ENCODE measurements at regions of chr20 and their contacts with region 1.

Region 1: GRCh38 chr20:51456511-51457509 is 85.7 kb downstream of the NFATC2 start:
- DNase-seq: peak; percentile 36
- ATAC-seq: peak; percentile 43
- H3K4me3 Mint-ChIP-seq: peak overlapping the region; percentile 59
- H3K27ac Mint-ChIP-seq: peak overlapping the region; percentile 79
- H3K4me1 Mint-ChIP-seq: peaks cover 64% of the 10 kb centered on the region
- H3K27me3 Mint-ChIP-seq: no peaks in the 10 kb centered on the region
- CTCF ChIP-seq: no peak

Region 2: DNA sequence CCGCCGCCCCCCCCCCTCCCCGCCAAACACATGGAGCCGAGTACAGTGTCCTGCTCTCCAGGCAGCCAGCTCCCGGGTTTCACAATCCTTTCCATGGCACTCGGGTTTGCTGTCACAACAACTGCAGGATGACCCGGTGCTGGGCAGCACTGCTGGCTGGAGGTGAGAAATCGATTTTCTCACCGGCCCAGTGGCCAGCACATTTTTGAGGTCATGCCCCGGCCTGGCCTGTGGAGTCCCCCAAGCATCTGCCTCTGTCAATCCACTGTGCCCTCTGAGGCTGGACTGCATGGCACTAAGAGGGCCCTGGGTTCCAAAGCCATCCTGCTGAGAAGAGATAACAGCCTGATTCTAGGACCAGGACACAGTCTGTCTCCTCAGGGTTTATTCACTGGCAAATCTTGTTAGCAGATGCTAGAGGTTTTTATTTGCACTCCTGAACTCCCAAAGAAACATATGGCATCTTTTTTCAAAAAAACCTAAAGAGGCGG is 43.8 kb before region 1 on chr20:
- CTCF ChIA-PET with region 1: no interaction called
- POLR2A ChIA-PET with region 1: interaction called, 7 read pairs
- intact Hi-C with region 1: loop called (anchors 2 kb)
- DNase-seq: no peak
- ATAC-seq: no peak
- H3K4me3 Mint-ChIP-seq: no peak overlapping the region
- H3K27ac Mint-ChIP-seq: peak overlapping the region; percentile 61
- H3K4me1 Mint-ChIP-seq: peaks cover 78% of the 10 kb centered on the region
- H3K27me3 Mint-ChIP-seq: no peaks in the 10 kb centered on the region
- CTCF ChIP-seq: no peak

Region 3: GRCh38 chr20:51480507-51481270 is 23.9 kb after region 1 on chr20:
- CTCF ChIA-PET with region 1: no interaction called
- POLR2A ChIA-PET with region 1: interaction called, 7 read pairs
- intact Hi-C with region 1: loop called (anchors 1 kb)
- DNase-seq: no peak
- ATAC-seq: peak; percentile 84
- H3K4me3 Mint-ChIP-seq: peak overlapping the region; percentile 48
- H3K27ac Mint-ChIP-seq: peak overlapping the region; percentile 80
- H3K4me1 Mint-ChIP-seq: peaks cover 38% of the 10 kb centered on the region
- H3K27me3 Mint-ChIP-seq: no peaks in the 10 kb centered on the region
- CTCF ChIP-seq: no peak

Region 4: DNA sequence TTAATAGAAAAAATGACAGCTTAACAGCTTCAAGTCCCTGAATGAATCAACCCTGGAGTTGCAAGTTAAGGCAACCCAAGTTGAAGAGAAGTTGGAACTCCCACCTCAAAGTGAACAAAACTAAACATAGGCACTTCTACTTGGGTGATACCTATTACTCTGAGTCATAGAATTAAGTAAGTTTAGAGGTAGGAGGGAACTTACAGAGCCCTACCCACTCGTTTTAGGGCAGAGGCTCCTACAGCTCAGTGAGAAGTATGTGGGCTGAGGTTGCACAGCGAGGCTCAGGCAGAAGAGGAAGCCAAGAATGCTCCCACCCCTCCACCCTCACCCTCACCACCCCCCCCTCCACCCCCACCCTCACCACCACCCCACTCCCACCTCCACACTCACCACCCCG is 43.5 kb after region 1 on chr20:
- CTCF ChIA-PET with region 1: interaction called, 3 read pairs
- POLR2A ChIA-PET with region 1: interaction called, 27 read pairs
- intact Hi-C with region 1: loop called (anchors 1 kb)
- DNase-seq: no peak
- ATAC-seq: peak; percentile 85
- H3K4me3 Mint-ChIP-seq: no peak overlapping the region
- H3K27ac Mint-ChIP-seq: peak overlapping the region; percentile 69
- H3K4me1 Mint-ChIP-seq: peaks cover 93% of the 10 kb centered on the region
- H3K27me3 Mint-ChIP-seq: no peaks in the 10 kb centered on the region
- CTCF ChIP-seq: no peak